ENCODE measurements at regions of chr7 and their contacts with region 1.

Region 1: GRCh38 chr7:50988465-50988864 is 205.8 kb upstream of the GRB10 start:
- DNase-seq: no peak
- H3K4me3 ChIP-seq: no peak overlapping the region
- H3K27ac ChIP-seq: no peak overlapping the region
- H3K4me1 ChIP-seq: no peaks in the 10 kb centered on the region
- H3K27me3 ChIP-seq: no peaks in the 10 kb centered on the region
- CTCF ChIP-seq: no peak
- EP300 ChIP-seq: no peak
- POLR2A ChIP-seq: no peak

Region 2: DNA sequence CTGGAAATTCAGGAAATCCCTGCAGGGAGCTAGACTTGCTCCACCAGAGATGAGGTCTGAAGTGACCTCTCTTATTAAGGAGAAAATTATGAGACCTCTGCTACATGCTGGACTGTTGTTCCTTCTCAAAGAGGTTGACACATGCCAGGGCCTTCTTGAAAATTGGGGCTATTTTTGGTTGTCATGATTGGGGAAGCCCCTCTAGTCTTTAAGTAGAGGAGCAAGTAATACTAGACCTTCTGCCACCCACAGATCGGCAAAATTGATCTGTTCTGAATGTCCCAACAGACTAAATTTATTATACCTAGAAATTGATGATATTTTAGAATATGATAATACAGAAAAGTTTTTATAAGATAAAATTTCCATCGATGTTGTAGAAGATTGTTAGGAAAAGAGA is 45.0 kb before region 1 on chr7:
- in situ Hi-C with region 1: no loop called
- intact Hi-C with region 1: no loop called
- DNase-seq: no peak
- H3K4me3 ChIP-seq: no peak overlapping the region
- H3K27ac ChIP-seq: no peak overlapping the region
- H3K4me1 ChIP-seq: no peaks in the 10 kb centered on the region
- H3K27me3 ChIP-seq: no peaks in the 10 kb centered on the region
- CTCF ChIP-seq: no peak
- EP300 ChIP-seq: no peak
- POLR2A ChIP-seq: no peak

Region 3: DNA sequence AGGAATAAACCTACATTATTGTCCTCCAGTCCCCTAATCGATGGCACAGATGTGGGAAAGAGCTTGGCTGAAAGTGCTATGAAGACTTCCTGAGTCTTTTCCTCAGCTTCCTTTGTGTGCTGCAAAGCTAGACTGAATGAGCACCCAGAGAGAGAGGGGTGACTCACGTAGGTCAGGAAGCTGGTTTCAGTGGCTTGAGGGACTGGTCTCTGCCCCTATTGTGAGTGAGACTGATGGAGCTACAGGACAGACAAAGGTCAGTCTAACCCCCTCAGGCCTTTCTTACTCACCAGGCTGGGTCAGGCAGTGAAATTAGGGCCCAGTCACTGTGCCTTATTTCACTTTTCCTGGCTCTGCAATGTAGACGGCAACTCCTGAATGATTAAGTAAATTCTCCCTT is 34.6 kb before region 1 on chr7:
- in situ Hi-C with region 1: no loop called
- intact Hi-C with region 1: no loop called
- DNase-seq: no peak
- H3K4me3 ChIP-seq: no peak overlapping the region
- H3K27ac ChIP-seq: no peak overlapping the region
- H3K4me1 ChIP-seq: peaks cover 0 to 4% (median 0%) of the 10 kb centered on the region in 4 donors
- H3K27me3 ChIP-seq: no peaks in the 10 kb centered on the region
- CTCF ChIP-seq: no peak
- EP300 ChIP-seq: no peak
- POLR2A ChIP-seq: no peak

Region 4: DNA sequence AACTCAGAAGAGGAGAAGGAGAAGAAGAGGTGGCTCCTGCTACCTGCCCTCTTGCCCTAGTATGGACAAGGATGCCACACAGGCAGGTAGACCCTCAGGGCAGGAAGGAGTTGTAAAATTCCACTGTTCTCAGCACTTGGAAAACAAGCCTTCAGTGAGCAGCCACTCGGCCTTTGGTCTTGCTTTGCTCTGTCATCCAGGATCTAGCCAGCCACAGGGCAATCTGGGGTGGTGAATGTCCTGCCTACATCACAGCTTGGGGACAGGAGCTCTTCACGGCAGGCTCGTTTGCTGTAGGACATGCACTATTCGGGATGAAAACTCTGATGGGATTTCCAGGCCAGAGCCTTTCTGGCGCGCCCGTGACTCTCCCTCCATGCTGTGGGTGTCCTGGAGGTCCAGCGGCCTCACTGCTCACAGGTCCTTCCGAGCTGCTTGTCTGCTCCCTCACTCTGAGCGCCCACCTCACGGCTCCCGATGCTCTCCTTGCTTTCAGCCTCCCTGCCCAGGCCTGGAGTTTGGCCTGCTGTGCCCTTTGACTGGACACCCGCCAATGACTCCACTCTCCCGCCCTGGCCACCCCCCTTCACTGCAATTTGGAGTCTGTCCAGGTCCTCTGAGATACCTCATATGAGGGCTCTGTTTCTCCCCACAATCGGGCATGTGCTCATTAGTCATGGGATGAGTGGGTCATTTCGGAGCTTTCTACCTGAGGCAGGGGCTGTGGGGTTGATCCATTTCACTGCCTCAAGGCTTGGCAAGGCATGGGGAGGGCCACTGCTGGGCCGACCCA is 21.4 kb after region 1 on chr7:
- in situ Hi-C with region 1: no loop called
- intact Hi-C with region 1: no loop called
- DNase-seq: no peak
- H3K4me3 ChIP-seq: no peak overlapping the region
- H3K27ac ChIP-seq: no peak overlapping the region
- H3K4me1 ChIP-seq: peaks cover 0 to 3% (median 0%) of the 10 kb centered on the region in 4 donors
- H3K27me3 ChIP-seq: no peaks in the 10 kb centered on the region
- CTCF ChIP-seq: no peak
- EP300 ChIP-seq: no peak
- POLR2A ChIP-seq: no peak

Region 5: GRCh38 chr7:51263631-51264484 is 275.4 kb after region 1 on chr7:
- in situ Hi-C with region 1: no loop called
- intact Hi-C with region 1: loop called (anchors 5 kb)
- DNase-seq: peak; percentile 72
- H3K4me3 ChIP-seq: peak overlapping the region in 1 of 4 donors; percentile 28
- H3K27ac ChIP-seq: peak overlapping the region; percentile 70 to 79 (median 76)
- H3K4me1 ChIP-seq: peaks cover 11 to 49% (median 41%) of the 10 kb centered on the region in 4 donors
- H3K27me3 ChIP-seq: no peaks in the 10 kb centered on the region
- CTCF ChIP-seq: no peak
- EP300 ChIP-seq: no peak
- POLR2A ChIP-seq: no peak

Measured in transverse colon (tissue), 4 donors.